Activated T-helper 1 cell treated with anti-CD3 and anti-CD28 coated beads, Interleukin-12 subunit alpha, Interleukin-12 subunit beta, Interleukin-2, Interleukin-4 antibody, amounts not matched to agents 30 ng/mL and 10 ng/mL and 1 ng/mL, durations not matched to agents 14 hours and 24 hours and 36 hours (primary cell): ENCODE measurements at regions of chr1 and their contacts with region 1.

Region 1: DNA sequence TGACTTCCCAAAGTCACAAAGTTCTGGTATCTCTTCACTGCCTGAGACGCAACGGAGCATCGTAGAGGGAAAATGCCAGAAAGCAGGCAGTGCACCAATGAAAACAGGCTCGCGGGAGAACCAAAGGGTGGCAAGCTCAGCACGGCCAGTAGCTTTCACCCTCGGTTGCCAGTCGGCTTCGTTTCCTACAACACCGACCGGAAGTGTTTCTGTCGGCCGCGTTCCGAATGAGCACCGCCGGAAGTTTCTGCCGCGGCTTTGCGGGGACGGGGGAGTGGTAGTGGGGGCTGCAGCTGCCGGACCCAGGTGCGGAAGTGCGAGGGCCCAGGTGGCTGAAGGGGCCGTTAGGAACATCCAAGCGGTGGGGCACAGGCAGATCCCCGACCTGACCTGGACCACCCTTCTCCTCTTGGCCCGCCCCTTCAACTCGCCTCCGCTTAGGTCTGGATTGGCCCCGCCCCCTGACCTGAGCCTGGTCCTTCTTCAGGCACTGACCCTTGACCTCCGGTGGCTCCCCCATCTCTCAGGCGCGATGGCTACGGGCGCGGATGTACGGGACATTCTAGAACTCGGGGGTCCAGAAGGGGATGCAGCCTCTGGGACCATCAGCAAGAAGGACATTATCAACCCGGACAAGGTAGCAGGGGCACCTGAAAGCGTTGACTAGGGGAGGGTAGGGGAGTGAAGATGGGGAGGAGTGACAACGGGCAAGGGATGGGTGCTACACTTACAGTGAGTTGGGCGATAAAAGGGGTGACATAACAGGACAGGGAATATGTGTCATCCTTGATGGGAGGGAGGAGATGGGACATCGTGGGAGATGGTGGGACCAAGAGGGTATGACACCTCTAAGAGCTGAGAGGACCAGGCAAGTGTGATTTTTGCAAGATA is at the start of gene DMAP1:
- DNase-seq: peak; percentile 83
- H3K4me3 Mint-ChIP-seq: peak within 1 kb of the TSS; percentile 90
- H3K27ac Mint-ChIP-seq: peak within 1 kb of the TSS; percentile 91
- H3K4me1 Mint-ChIP-seq: peaks cover 39% of the 10 kb centered on the region
- H3K27me3 Mint-ChIP-seq: peaks cover 8% of the 10 kb centered on the region
- total RNA-seq, gene DMAP1: 37.4 and 38.1 TPM in 2 replicates

Region 2: DNA sequence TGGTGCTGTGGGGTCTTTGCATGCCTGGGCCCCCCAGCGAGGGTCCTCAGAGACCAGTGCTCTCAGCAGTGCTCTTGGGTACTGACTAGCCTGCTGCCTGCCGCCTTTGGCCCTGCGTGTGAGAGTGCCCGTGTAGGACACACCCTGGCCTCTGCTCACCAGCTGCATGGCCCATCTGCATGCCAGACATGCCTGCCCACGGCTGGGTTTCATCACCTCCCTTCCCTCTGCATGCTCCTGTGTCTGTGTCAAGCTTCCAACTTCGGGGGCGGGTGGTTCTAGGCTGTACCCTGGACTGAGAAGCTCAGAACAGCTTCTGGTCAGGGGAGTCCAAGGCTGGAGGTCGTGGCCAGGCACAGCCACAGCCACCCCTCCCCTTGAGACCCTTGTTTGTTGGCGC is 625.9 kb before region 1 on chr1:
- intact Hi-C with region 1: no loop called
- DNase-seq: no peak
- H3K4me3 Mint-ChIP-seq: no peak overlapping the region
- H3K27ac Mint-ChIP-seq: no peak overlapping the region
- H3K4me1 Mint-ChIP-seq: no peaks in the 10 kb centered on the region
- H3K27me3 Mint-ChIP-seq: peaks cover 2% of the 10 kb centered on the region

Region 3: DNA sequence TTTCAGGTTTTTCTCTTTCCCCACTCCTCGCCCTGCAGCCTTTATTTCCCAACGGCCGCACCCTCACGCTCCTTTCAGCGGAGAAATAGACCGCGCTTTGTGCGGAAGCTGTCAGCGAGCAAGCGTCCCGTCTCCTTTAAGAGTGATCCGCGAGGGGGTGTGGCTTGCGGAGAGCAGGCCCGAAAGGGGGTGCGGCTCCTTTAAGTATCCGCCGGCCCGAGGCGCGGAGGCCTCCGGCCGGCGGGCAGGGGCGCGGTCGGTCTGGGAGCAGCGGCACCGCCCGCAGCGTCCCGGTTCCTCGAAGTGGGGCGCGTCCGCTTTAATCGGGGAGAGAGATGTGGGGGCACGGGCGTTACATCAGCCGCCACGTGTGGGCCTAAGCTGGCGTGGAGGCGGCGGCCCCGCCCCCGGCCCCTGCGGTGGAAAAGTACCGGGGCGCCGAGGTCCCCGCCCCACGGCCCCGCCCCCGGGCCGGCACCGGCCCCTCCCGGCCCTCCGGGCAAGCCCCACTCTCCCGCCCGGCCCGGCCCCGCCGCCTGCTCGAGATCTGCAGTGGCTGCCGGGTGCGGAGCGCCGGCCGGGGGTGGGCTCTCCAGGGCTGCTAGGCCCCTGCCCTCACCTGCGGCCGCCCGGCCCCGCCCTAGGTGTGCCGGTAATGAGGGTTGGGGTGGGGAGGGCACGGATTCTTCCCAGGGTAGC is 183.4 kb before region 1 on chr1:
- intact Hi-C with region 1: loop called (anchors 2 kb)
- DNase-seq: peak; percentile 86
- H3K4me3 Mint-ChIP-seq: peak overlapping the region; percentile 90
- H3K27ac Mint-ChIP-seq: peak overlapping the region; percentile 92
- H3K4me1 Mint-ChIP-seq: peaks cover 30% of the 10 kb centered on the region
- H3K27me3 Mint-ChIP-seq: peaks cover 2% of the 10 kb centered on the region

Region 4: DNA sequence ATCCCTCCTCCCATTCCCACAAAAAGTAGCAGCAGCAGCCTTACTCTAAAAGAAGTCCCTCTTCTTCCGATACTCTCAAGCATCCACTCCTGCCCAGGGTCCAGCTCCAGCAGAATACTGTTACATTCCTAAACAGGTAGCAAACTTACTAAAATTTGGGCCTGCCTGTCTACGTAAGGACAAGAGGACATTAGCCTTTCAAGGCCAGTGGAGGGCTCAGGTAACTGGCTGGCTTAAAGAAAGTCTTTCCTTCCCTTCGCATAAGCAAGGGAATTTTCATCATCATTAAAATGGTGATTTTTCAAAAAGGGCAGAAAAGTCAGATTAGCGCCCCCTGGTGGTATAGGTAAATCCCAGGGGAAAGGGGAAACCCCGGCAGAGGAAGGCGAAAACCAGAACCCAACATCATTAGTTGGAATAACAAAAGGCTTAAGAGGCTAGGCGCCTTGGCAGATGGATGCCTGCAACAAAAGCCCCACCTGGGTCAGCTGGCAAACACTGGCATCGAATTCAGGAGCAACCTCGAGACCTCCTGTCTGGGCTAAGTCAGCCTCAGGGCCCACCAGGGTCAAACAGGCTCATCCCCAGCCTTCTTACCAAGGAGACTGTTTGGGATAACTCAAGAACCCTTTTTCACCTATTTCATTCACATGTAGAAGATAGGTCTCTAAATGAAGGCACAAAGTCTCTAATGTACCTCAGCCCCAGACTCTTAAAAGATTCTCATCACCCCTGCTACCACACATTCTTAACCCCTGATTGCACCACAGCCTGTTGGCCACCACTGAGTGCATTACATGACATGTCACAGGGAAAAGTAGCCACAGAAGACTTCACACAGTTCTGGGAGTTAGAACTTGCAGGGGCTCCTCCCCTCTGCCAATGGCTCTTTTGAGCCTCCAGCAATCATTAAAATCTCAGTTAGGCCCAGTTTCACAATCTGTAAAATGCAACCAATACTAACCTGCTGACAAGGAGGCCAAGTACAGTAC is 104.9 kb after region 1 on chr1:
- intact Hi-C with region 1: loop called (anchors 1 kb)
- DNase-seq: peak; percentile 34
- H3K4me3 Mint-ChIP-seq: no peak overlapping the region
- H3K27ac Mint-ChIP-seq: no peak overlapping the region
- H3K4me1 Mint-ChIP-seq: peaks cover 33% of the 10 kb centered on the region
- H3K27me3 Mint-ChIP-seq: no peaks in the 10 kb centered on the region

Region 5: GRCh38 chr1:44594871-44595746 is 381.6 kb after region 1 on chr1:
- intact Hi-C with region 1: loop called (anchors 1 kb)
- DNase-seq: peak; percentile 57
- H3K4me3 Mint-ChIP-seq: no peak overlapping the region
- H3K27ac Mint-ChIP-seq: no peak overlapping the region
- H3K4me1 Mint-ChIP-seq: no peaks in the 10 kb centered on the region
- H3K27me3 Mint-ChIP-seq: peaks cover 5% of the 10 kb centered on the region

Region 6: GRCh38 chr1:44652445-44653106 is 439.1 kb after region 1 on chr1:
- intact Hi-C with region 1: loop called (anchors 2 kb)
- DNase-seq: peak; percentile 59
- H3K4me3 Mint-ChIP-seq: no peak overlapping the region
- H3K27ac Mint-ChIP-seq: no peak overlapping the region
- H3K4me1 Mint-ChIP-seq: no peaks in the 10 kb centered on the region
- H3K27me3 Mint-ChIP-seq: no peaks in the 10 kb centered on the region